PC-9 (cell line): ENCODE measurements at regions of chr10 and their contacts with region 1.

Region 1: DNA sequence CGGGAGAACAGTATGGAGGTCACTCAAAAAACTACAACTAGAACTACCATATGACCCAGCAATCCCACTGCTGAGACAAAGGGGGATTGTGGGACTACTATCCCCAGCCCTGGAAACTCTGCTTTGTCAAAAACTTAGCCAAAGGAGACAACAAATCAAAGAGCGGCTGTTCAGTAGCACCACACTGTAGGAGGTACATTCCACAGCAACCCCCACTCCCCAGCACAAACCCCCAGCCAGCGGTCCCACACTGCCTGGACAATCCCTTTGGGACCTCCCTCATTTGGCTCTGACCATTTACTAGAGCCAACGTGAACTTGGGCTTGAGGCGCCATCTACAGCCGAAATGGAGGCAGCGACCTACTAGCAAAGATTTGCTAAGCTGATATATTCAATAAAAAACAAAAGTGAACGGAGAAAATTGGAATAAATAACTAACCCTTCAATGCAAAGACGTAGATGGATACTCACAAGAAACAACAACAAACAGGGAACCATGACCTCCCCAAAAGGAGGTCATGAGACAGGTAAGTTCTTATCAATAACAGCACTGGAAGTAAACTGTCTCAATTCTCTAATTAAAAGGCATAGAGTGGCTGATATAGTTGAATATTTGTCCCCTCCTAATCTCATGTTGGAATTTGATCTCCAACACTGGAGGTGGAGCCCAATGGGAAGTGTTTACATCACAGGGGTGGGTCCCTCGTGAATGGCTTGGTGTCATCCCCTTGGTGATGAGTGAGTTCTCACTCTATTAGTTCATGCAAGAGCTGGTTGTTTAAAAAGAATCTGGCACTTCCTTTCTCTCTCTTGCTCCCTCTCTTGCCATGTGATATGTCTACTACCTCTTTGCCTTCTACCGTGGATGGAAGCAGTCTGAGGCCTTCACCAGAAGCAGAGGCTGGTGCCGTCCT is 119.0 kb upstream of the KCNMA1 start:
- DNase-seq: peak; percentile 41 to 55
- H3K4me3 ChIP-seq: no peak overlapping the region
- H3K27ac ChIP-seq: no peak overlapping the region
- H3K4me1 ChIP-seq: 0 out of 2 replicates have a peak, but pooled peaks cover 5% of the 10 kb centered on the region
- H3K27me3 ChIP-seq: no peaks in the 10 kb centered on the region
- CTCF ChIP-seq: peak; percentile 90

Region 2: GRCh38 chr10:77165445-77166208 is 590.9 kb before region 1 on chr10:
- CTCF ChIA-PET with region 1: interaction called, 4 read pairs
- POLR2A ChIA-PET with region 1: no interaction called
- intact Hi-C with region 1: loop called (anchors 2 kb)
- DNase-seq: peak; percentile 49 to 54
- H3K4me3 ChIP-seq: no peak overlapping the region
- H3K27ac ChIP-seq: no peak overlapping the region
- H3K4me1 ChIP-seq: peaks cover 60% of the 10 kb centered on the region
- H3K27me3 ChIP-seq: no peaks in the 10 kb centered on the region
- CTCF ChIP-seq: peak; percentile 96

Region 3: DNA sequence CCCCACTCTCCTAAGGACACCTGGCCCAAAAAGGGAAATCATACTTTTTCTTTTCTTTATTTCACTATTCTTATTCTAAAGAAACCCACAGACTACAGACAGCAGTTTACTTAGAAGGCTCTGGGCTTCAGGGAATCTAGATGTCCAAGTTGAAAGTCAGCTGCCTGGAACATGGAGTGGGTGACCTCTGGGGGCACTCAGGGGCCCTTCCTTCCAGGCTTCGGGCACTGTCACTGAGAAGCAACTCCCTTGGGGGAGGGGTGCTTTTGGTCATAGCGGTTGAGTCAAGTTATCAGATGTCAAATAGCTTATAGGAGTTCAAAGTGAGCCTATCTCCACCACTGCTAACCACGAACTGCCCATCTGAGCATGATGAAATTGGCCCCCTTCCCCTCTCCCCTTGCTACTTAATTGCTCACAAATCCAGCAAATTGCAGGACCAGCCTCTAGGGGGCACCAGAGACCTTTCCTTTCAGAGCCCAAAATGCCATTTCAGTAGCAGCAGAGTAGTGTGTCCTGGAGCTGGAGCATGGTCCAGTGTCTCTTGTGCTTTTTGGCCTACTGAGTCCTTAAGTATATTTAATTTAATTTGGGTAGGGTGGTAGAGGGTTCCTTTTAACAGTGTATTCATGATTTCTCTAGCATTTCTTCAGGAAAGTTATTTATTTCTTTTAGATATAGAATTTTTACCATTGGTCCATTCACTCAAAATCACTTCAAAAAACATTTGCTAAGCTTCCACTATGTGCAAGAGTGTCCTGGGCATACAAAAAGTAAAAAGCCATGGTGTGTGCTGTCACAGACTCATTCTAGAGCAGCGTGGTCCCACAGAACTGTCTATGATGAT is 582.7 kb before region 1 on chr10:
- CTCF ChIA-PET with region 1: interaction called, 3 read pairs
- POLR2A ChIA-PET with region 1: no interaction called
- intact Hi-C with region 1: loop called (anchors 2 kb)
- DNase-seq: peak; percentile 63 to 71
- H3K4me3 ChIP-seq: no peak overlapping the region
- H3K27ac ChIP-seq: no peak overlapping the region
- H3K4me1 ChIP-seq: peaks cover 6% of the 10 kb centered on the region
- H3K27me3 ChIP-seq: no peaks in the 10 kb centered on the region
- CTCF ChIP-seq: peak; percentile 98

Region 4: GRCh38 chr10:77710759-77711682 is 45.6 kb before region 1 on chr10:
- CTCF ChIA-PET with region 1: interaction called, 8 read pairs
- POLR2A ChIA-PET with region 1: no interaction called
- intact Hi-C with region 1: loop called (anchors 1 kb)
- DNase-seq: peak in 1 of 2 experiments; percentile 73
- H3K4me3 ChIP-seq: peak overlapping the region; percentile 27; the same call in 1 of the 2 replicates
- H3K27ac ChIP-seq: no peak overlapping the region
- H3K4me1 ChIP-seq: no peaks in the 10 kb centered on the region
- H3K27me3 ChIP-seq: no peaks in the 10 kb centered on the region
- CTCF ChIP-seq: peak; percentile 98

Region 5: DNA sequence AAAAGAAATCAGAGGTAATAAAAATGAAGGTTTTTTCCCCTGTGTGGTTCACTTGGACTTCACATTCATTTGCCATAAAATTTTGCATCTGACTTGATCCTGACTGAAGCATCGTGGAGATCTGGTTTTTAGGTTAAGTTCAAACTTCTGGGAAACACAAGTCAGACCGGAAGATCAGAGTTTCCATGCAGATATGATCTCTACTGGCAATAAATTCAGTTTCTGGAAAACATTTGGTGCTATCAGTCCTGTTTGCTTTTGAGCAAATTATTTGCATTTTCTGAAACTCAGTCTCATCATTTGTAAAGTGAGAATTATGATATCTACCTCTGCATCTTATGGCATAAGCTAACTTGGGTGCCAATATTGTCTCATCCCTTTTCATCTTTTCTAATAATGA is 37.6 kb before region 1 on chr10:
- CTCF ChIA-PET with region 1: interaction called, 3 read pairs
- POLR2A ChIA-PET with region 1: no interaction called
- intact Hi-C with region 1: loop called (anchors 1 kb)
- DNase-seq: no peak
- H3K4me3 ChIP-seq: no peak overlapping the region
- H3K27ac ChIP-seq: no peak overlapping the region
- H3K4me1 ChIP-seq: no peaks in the 10 kb centered on the region
- H3K27me3 ChIP-seq: no peaks in the 10 kb centered on the region
- CTCF ChIP-seq: no peak

Region 6: DNA sequence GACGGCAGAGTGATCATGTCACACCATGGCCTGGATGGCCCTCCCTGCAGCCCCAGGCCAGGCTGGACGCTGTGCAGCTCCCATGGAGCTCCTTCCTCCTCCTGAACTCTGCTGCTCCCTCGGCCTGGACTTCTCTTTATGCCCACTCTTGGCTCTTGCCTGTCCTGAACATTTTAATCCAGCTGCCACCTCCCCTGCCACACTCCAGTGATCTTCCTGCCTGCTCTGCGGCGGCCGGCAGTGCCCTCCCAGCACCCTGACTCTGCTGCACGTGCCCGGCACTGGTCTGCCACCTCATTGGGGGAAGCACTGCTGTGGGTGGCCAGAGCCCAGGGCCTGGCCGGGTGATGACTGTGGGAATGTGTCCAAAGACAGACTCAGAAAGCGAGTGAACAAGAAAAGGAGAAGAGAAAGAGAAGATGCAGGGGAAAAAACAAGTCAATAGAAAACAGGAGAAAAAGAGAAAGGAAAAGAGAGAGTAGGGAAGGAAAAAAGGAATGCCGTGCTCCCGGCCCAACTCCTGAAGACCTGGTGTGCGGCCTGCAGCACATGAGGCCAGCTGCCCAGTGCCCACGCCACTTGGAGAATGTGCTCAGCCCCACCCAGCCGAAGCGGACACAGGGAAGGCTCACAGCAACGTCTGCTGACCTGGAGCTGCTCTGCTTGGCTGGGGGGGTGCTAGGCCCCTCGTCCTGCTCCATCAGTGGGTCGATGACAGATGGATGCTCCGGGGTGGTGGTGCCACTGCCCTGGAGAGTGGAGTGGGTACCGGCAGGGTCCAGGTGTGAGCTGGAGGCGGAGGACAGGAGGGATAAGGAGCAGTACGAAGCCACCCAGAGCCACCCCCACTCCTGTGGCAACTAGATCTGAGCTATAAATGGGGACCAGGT is 54.1 kb after region 1 on chr10:
- CTCF ChIA-PET with region 1: no interaction called
- POLR2A ChIA-PET with region 1: no interaction called
- intact Hi-C with region 1: no loop called
- DNase-seq: no peak
- H3K4me3 ChIP-seq: no peak overlapping the region
- H3K27ac ChIP-seq: no peak overlapping the region
- H3K4me1 ChIP-seq: no peaks in the 10 kb centered on the region
- H3K27me3 ChIP-seq: no peaks in the 10 kb centered on the region
- CTCF ChIP-seq: no peak